SK-N-SH (cell line): ENCODE measurements at regions of chr2 and their contacts with region 1.

Region 1: DNA sequence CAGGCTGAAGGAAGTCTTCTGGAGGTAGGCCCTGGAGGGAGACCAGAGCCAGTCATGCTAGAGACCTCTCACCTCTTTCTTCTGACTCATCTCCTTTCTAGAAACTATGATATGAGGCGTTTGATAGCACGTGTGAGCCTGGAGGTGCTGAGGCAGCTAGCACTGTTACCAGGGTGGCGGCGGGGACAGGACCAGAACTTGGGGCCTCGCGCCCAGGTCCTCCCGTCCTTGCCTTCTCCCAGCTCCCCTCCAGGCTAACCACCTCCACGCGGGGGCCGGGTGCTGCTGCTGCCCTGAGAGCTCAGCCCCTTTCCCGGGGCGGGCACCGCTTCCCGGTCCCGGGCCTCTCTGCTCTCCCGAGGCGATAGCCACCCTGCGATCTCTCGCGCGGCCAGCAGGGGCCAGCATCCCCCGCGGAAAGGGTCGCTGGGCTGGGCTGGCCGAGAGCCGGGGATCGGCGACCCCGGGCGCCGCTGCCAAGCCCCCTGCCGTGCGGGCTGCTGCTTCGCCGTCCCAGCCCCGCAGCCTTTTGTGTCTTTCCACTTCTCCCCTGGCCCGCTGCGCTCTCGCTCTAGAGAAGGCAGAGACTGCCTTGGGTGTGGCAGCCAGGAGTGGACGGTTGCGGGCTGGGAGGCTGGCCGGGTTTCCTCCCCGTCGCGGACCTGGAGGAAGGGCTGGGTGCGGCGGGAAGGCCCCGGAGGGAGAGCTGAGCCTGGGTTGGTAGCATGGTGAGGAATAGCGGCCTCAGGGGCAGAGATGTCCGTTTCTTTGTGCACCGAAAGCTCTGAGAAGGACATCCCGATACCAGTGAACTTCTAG is 49.1 kb downstream of the TMEM17 start:
- DNase-seq: peak; percentile 95
- H3K4me3 ChIP-seq: peak overlapping the region; percentile 58 to 67
- H3K27ac ChIP-seq: peak overlapping the region; percentile 32 to 63; a peak in 2 of 4 replicates
- H3K4me1 ChIP-seq: peaks cover 0 to 12% of the 10 kb centered on the region in 2 experiments; a peak in 1 of 4 replicates
- H3K27me3 ChIP-seq: no peaks in the 10 kb centered on the region
- CTCF ChIP-seq: peak; percentile 83
- EP300 ChIP-seq: no peak; a peak in 1 of 4 replicates
- RAD21 ChIP-seq: peak; percentile 94

Region 2: DNA sequence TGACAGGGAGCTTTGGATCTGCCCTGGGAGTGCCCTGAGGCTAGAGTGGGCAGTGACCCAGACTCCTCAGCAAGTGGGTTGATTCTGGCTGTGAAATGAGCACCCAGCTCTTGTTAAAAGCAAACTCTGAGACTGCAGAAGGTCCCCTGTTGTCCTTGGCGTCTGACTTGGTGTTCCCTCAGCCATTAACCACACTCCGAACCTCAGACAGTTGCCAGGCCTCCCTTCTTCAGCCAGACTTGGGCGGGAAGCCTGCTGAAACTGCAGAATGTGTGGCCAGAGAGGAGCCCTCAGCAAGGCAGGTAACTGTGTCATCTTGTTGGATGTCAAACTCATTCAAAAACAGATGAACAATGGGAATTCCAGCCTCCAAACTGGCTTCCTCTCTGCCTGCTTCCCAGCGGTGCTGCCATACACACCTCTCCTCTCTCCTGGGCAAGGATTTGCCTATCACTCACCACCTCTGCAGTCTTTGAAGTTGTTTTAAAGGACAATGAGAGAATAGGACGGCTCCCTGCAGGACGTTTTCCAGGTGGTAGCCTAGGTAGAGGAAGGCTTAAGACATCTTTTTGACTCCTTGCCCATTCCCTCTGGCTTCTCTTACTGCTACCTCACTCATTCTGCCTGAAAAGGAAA is 300.0 kb before region 1 on chr2:
- CTCF ChIA-PET with region 1: no interaction called
- POLR2A ChIA-PET with region 1: no interaction called
- DNase-seq: no peak
- H3K4me3 ChIP-seq: no peak overlapping the region
- H3K27ac ChIP-seq: no peak overlapping the region
- H3K4me1 ChIP-seq: peaks cover 0 to 5% of the 10 kb centered on the region in 2 experiments; a peak in 1 of 4 replicates
- H3K27me3 ChIP-seq: no peaks in the 10 kb centered on the region
- CTCF ChIP-seq: no peak
- EP300 ChIP-seq: no peak
- RAD21 ChIP-seq: no peak

Region 3: GRCh38 chr2:62443886-62444285 is 13.0 kb before region 1 on chr2:
- CTCF ChIA-PET with region 1: interaction called, 19 read pairs
- POLR2A ChIA-PET with region 1: no interaction called
- DNase-seq: no peak
- H3K4me3 ChIP-seq: no peak overlapping the region
- H3K27ac ChIP-seq: no peak overlapping the region
- H3K4me1 ChIP-seq: no peaks in the 10 kb centered on the region
- H3K27me3 ChIP-seq: no peaks in the 10 kb centered on the region; the same call in 1 of the 2 replicates
- CTCF ChIP-seq: no peak
- EP300 ChIP-seq: no peak
- RAD21 ChIP-seq: no peak

Region 4: GRCh38 chr2:62475172-62476011 is 18.5 kb after region 1 on chr2:
- CTCF ChIA-PET with region 1: interaction called, 35 read pairs
- POLR2A ChIA-PET with region 1: no interaction called
- DNase-seq: peak; percentile 76
- H3K4me3 ChIP-seq: peak overlapping the region in 1 of 2 experiments; percentile 3; a peak in 1 of 4 replicates
- H3K27ac ChIP-seq: peak overlapping the region in 1 of 2 experiments; percentile 65; a peak in 1 of 4 replicates
- H3K4me1 ChIP-seq: peaks cover 10 to 25% of the 10 kb centered on the region in 2 experiments; a peak in 3 of 4 replicates
- H3K27me3 ChIP-seq: no peaks in the 10 kb centered on the region
- CTCF ChIP-seq: no peak
- EP300 ChIP-seq: peak in 1 of 2 experiments; percentile 66; a peak in 1 of 4 replicates
- RAD21 ChIP-seq: no peak

Region 5: GRCh38 chr2:62705007-62705829 is 248.3 kb after region 1 on chr2 and contains the start of gene EHBP1:
- CTCF ChIA-PET with region 1: interaction called, 15 read pairs
- POLR2A ChIA-PET with region 1: no interaction called
- DNase-seq: peak; percentile 98
- H3K4me3 ChIP-seq: peak within 1 kb of the TSS; percentile 72 to 89
- H3K27ac ChIP-seq: peak within 1 kb of the TSS; percentile 79 to 92
- H3K4me1 ChIP-seq: peaks cover 0 to 25% of the 10 kb centered on the region in 2 experiments; a peak in 2 of 4 replicates
- H3K27me3 ChIP-seq: no peaks in the 10 kb centered on the region
- CTCF ChIP-seq: no peak
- EP300 ChIP-seq: no peak; a peak in 1 of 4 replicates
- RAD21 ChIP-seq: no peak
- polyA plus RNA-seq, gene EHBP1: 62.7 and 64.9 TPM in 2 replicates

Region 6: GRCh38 chr2:62787386-62787785 is 330.5 kb after region 1 on chr2:
- CTCF ChIA-PET with region 1: interaction called, 38 read pairs
- POLR2A ChIA-PET with region 1: no interaction called
- DNase-seq: peak; percentile 31
- H3K4me3 ChIP-seq: no peak overlapping the region
- H3K27ac ChIP-seq: no peak overlapping the region
- H3K4me1 ChIP-seq: no peaks in the 10 kb centered on the region; a peak in 2 of 4 replicates
- H3K27me3 ChIP-seq: no peaks in the 10 kb centered on the region
- CTCF ChIP-seq: peak; percentile 52
- EP300 ChIP-seq: no peak
- RAD21 ChIP-seq: peak; percentile 82